ENCODE measurements at regions of chr20 and their contacts with region 1.

Region 1: GRCh38 chr20:45576995-45577394 is 2.1 kb downstream of the WFDC8 start:
- DNase-seq: no peak
- H3K4me3 Mint-ChIP-seq: no peak overlapping the region
- H3K27ac Mint-ChIP-seq: no peak overlapping the region
- H3K4me1 Mint-ChIP-seq: no peaks in the 10 kb centered on the region
- H3K27me3 Mint-ChIP-seq: peaks cover 36% of the 10 kb centered on the region

Region 2: GRCh38 chr20:45564760-45565276 is 12.2 kb before region 1 on chr20:
- CTCF ChIA-PET with region 1: no interaction called
- POLR2A ChIA-PET with region 1: no interaction called
- DNase-seq: no peak
- H3K4me3 Mint-ChIP-seq: no peak overlapping the region
- H3K27ac Mint-ChIP-seq: no peak overlapping the region
- H3K4me1 Mint-ChIP-seq: no peaks in the 10 kb centered on the region
- H3K27me3 Mint-ChIP-seq: peaks cover 7% of the 10 kb centered on the region

Region 3: GRCh38 chr20:45595235-45595634 is 18.2 kb after region 1 on chr20:
- CTCF ChIA-PET with region 1: no interaction called
- POLR2A ChIA-PET with region 1: interaction called, 14 read pairs
- DNase-seq: no peak
- H3K4me3 Mint-ChIP-seq: no peak overlapping the region
- H3K27ac Mint-ChIP-seq: no peak overlapping the region
- H3K4me1 Mint-ChIP-seq: no peaks in the 10 kb centered on the region
- H3K27me3 Mint-ChIP-seq: peaks cover 31% of the 10 kb centered on the region

Measured in activated CD4-positive, alpha-beta T cell treated with anti-CD3 and anti-CD28 coated beads, Interleukin-2, amount 10 ng/mL, durations not matched to agents 7 days and 5 days (primary cell).